Dendritic cell treated with granulocyte-macrophage colony-stimulating factor and Interleukin-4, amounts not matched to agents 40 ng/mL and 50 ng/mL, for 4 days (primary cell): ENCODE measurements at regions of chr1 and their contacts with region 1.

Region 1: GRCh38 chr1:197924516-197925123 is 7.4 kb downstream of the LHX9 start:
- H3K4me3 Mint-ChIP-seq: no peak overlapping the region
- H3K27ac Mint-ChIP-seq: no peak overlapping the region
- H3K4me1 Mint-ChIP-seq: peaks cover 23% of the 10 kb centered on the region
- H3K27me3 Mint-ChIP-seq: peaks cover 80% of the 10 kb centered on the region

Region 2: GRCh38 chr1:197399755-197400527 is 524.7 kb before region 1 on chr1:
- intact Hi-C with region 1: loop called (anchors 5 kb)
- H3K4me3 Mint-ChIP-seq: no peak overlapping the region
- H3K27ac Mint-ChIP-seq: no peak overlapping the region
- H3K4me1 Mint-ChIP-seq: peaks cover 5% of the 10 kb centered on the region
- H3K27me3 Mint-ChIP-seq: no peaks in the 10 kb centered on the region

Region 3: DNA sequence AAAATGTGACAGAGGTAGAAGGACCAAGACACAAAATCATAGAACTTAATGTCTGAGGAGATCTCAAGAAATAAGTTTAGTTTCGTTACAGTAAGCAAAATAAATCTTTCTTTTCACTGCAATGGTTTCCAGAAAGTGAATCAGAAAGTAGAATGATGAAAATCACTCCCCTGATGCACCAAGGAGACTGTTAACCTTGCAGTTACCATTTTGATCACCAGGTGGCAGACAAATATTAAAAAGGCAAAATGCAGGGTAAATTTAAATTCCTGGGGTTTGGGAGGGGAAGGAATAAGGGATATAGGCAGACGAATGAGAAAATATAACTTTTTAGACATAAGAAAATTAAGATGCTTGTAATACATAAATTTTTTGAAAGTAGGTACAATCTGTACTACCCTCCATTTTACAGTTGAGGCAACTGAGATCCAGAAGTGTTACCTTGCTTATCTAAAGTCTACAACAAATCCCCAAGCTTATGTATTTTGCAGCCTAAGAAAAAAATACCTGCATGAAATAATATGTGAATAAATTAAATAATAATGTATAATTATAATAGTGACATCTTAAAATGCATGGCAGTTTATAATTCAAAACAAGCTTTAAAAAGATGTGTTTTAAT is 403.4 kb before region 1 on chr1:
- intact Hi-C with region 1: loop called (anchors 5 kb)
- H3K4me3 Mint-ChIP-seq: no peak overlapping the region
- H3K27ac Mint-ChIP-seq: no peak overlapping the region
- H3K4me1 Mint-ChIP-seq: no peaks in the 10 kb centered on the region
- H3K27me3 Mint-ChIP-seq: no peaks in the 10 kb centered on the region

Region 4: GRCh38 chr1:197614916-197615692 is 309.5 kb before region 1 on chr1:
- intact Hi-C with region 1: loop called (anchors 5 kb)
- H3K4me3 Mint-ChIP-seq: no peak overlapping the region
- H3K27ac Mint-ChIP-seq: no peak overlapping the region
- H3K4me1 Mint-ChIP-seq: no peaks in the 10 kb centered on the region
- H3K27me3 Mint-ChIP-seq: no peaks in the 10 kb centered on the region

Region 5: DNA sequence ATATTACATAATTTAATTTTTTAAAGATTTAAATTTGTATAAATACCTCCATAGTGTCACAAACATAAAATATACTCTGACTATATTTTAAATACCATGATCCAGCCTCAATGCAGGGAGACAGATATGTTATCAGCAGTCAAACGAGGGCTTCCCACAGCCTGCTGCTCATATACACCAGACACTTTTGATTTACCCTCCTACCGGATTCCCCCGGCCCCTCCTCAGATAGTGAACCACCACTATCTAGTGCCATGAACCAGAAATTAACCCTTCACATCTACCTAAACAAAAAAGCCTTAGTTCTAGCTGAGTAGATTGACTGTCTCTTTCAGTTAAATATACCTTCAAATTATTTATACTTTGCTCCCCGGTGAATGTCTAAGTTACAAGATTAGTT is 74.6 kb before region 1 on chr1:
- intact Hi-C with region 1: no loop called
- H3K4me3 Mint-ChIP-seq: no peak overlapping the region
- H3K27ac Mint-ChIP-seq: no peak overlapping the region
- H3K4me1 Mint-ChIP-seq: peaks cover 9% of the 10 kb centered on the region
- H3K27me3 Mint-ChIP-seq: no peaks in the 10 kb centered on the region